ENCODE measurements at regions of chr5 and their contacts with region 1.

Region 1: GRCh38 chr5:79514391-79515105 is 614 bp upstream of the HOMER1 start:
- DNase-seq: peak; percentile 94
- ATAC-seq: peak; percentile 82
- H3K4me3 Mint-ChIP-seq: peak overlapping the region; percentile 93
- H3K27ac Mint-ChIP-seq: peak overlapping the region; percentile 97
- H3K4me1 Mint-ChIP-seq: peaks cover 35% of the 10 kb centered on the region
- H3K27me3 Mint-ChIP-seq: peaks cover 15% of the 10 kb centered on the region

Region 2: DNA sequence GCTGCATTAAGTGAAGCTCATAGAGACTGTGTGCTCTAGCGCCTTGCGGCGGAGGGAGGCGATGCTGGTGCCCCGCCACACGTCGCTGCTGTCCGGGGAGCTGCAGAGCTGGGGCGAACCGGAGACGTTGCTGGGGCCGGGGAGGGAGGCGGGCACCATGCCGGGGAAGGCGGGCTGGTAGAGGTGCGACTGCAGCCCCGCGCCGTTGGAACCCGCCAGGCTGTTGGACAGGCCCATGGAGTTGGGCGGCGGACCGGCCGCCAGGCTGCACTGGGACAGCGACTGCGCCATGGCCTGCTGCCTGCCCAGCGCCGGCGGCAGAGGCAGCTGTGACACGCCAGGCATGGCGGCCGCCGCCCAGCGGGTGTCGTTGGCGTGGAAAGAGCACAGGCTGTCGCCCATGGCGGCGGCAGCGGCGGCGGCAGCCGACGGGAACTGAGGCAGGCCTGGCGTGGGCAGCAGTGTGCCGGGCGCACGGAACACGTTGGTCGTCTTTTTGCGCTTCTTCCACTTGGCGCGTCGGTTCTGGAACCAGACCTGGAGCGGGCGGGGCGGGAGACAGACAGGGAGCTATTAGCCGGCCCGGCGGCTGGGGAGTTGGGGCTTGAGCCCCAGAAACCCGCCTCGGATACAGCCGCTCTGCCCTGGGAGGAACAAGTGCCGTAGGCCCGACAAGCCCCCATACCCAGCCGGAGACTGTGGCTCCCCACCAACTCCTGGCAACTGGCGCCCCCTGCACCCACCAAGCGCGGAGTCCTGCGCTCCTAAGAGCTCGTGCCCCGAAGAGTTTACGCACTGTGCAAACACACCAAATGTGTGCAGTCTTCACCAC is 1884.1 kb before region 1 on chr5:
- CTCF ChIA-PET with region 1: no interaction called
- POLR2A ChIA-PET with region 1: no interaction called
- intact Hi-C with region 1: loop called in 1 of 2 experiments (anchors 5 kb)
- DNase-seq: peak; percentile 83
- ATAC-seq: peak; percentile 92
- H3K4me3 Mint-ChIP-seq: peak overlapping the region; percentile 74
- H3K27ac Mint-ChIP-seq: no peak overlapping the region
- H3K4me1 Mint-ChIP-seq: peaks cover 26% of the 10 kb centered on the region
- H3K27me3 Mint-ChIP-seq: peaks cover 69% of the 10 kb centered on the region

Region 3: GRCh38 chr5:78359831-78360673 is 1154.5 kb before region 1 on chr5 and contains the start of gene SCAMP1:
- CTCF ChIA-PET with region 1: no interaction called
- POLR2A ChIA-PET with region 1: no interaction called
- intact Hi-C with region 1: loop called in 1 of 2 experiments (anchors 1 kb)
- DNase-seq: peak; percentile 95
- ATAC-seq: peak; percentile 94
- H3K4me3 Mint-ChIP-seq: peak within 1 kb of the TSS; percentile 94
- H3K27ac Mint-ChIP-seq: peak within 1 kb of the TSS; percentile 97
- H3K4me1 Mint-ChIP-seq: peaks cover 35% of the 10 kb centered on the region
- H3K27me3 Mint-ChIP-seq: no peaks in the 10 kb centered on the region
- total RNA-seq, gene SCAMP1: 15.5 to 24.1 TPM

Region 4: DNA sequence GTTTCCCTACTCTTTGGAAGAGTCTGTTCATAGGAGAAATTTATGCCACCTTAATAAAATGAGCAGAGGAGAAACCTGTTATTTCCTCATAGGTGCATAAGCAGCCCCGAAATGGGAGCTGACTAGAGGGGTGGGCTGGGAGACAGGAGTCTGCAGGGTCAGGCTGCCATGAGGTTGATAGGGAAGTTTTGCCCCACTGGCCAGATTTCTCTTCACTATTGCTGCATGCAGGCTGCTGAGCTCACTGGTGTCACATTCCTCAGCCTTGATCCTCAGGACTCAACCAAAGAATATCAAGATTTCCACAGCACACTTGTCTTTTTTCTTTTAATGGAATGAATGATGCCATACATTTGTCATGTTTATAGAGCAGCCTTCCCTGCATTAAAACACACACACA is 342.3 kb before region 1 on chr5:
- CTCF ChIA-PET with region 1: no interaction called
- POLR2A ChIA-PET with region 1: no interaction called
- intact Hi-C with region 1: no loop called
- DNase-seq: no peak
- ATAC-seq: no peak
- H3K4me3 Mint-ChIP-seq: no peak overlapping the region
- H3K27ac Mint-ChIP-seq: no peak overlapping the region
- H3K4me1 Mint-ChIP-seq: no peaks in the 10 kb centered on the region
- H3K27me3 Mint-ChIP-seq: peaks cover 3% of the 10 kb centered on the region

Region 5: DNA sequence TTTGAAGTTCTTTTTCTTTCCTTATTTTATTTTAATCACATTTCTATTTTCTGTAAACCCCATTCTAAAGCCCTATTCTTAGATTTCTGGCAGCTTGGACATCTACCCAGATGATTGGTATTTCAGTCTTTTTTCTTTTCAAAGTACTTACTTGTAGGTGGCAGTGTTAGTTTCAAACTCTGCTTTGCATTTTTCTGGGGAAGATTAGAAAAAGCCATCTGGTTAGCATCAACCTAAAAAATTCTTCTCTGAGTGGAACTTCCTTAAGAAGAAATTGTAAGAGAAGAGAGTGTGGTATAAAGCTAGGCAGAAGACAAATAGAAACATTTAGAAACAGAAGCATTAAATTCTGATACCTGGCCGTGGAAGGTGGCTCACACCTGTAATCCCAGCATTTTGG is 80.5 kb after region 1 on chr5:
- CTCF ChIA-PET with region 1: no interaction called
- POLR2A ChIA-PET with region 1: no interaction called
- intact Hi-C with region 1: no loop called
- DNase-seq: no peak
- ATAC-seq: no peak
- H3K4me3 Mint-ChIP-seq: no peak overlapping the region
- H3K27ac Mint-ChIP-seq: no peak overlapping the region
- H3K4me1 Mint-ChIP-seq: no peaks in the 10 kb centered on the region
- H3K27me3 Mint-ChIP-seq: peaks cover 4% of the 10 kb centered on the region